Activated CD4-positive, alpha-beta T cell treated with anti-CD3 and anti-CD28 coated beads, Interleukin-2, amount 10 ng/mL, durations not matched to agents 24 days and 14 days (primary cell): ENCODE measurements at regions of chr2 and their contacts with region 1.

Region 1: GRCh38 chr2:213151437-213152064 is at the start of gene IKZF2:
- DNase-seq: peak; percentile 88
- H3K4me3 Mint-ChIP-seq: peak within 1 kb of the TSS; percentile 88
- H3K27ac Mint-ChIP-seq: peak within 1 kb of the TSS; percentile 73
- H3K4me1 Mint-ChIP-seq: peaks cover 28% of the 10 kb centered on the region
- H3K27me3 Mint-ChIP-seq: peaks cover 59% of the 10 kb centered on the region
- total RNA-seq, gene IKZF2: 1.7 and 1.9 TPM in 2 replicates

Region 2: DNA sequence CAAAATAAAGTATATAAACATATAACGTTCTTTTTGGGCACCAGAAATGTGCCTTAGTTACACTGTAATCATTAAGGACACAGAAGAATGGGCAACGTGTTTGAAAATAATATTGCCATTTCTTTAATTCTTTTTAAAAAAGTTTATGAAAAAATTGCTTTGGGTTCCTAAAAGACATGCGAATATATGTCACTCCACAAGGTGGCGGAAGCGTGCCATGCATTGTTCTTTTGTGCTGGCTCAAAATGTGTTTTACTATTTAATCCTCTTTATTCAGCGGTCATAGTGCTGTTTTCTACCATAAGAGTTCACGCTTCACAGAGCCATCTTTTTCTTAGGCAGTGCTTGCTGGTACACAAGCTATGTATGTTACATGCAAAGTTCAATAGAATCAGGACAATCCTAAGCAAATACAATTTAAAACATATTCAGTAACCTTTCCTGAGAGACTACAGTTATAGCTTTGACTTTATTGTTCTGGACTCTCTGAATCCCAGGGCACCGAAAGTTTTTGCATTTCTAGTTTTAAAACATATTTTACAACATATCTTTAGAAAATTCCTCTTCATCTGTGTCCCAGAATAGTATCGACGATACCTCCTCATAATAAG is 465.2 kb before region 1 on chr2:
- intact Hi-C with region 1: loop called (anchors 1 kb)
- DNase-seq: peak; percentile 80
- H3K4me3 Mint-ChIP-seq: no peak overlapping the region
- H3K27ac Mint-ChIP-seq: no peak overlapping the region
- H3K4me1 Mint-ChIP-seq: peaks cover 1% of the 10 kb centered on the region
- H3K27me3 Mint-ChIP-seq: no peaks in the 10 kb centered on the region

Region 3: GRCh38 chr2:212777020-212777491 is 374.5 kb before region 1 on chr2:
- intact Hi-C with region 1: loop called (anchors 1 kb)
- DNase-seq: peak; percentile 54
- H3K4me3 Mint-ChIP-seq: no peak overlapping the region
- H3K27ac Mint-ChIP-seq: no peak overlapping the region
- H3K4me1 Mint-ChIP-seq: peaks cover 2% of the 10 kb centered on the region
- H3K27me3 Mint-ChIP-seq: no peaks in the 10 kb centered on the region

Region 4: GRCh38 chr2:212882626-212883025 is 268.9 kb before region 1 on chr2:
- intact Hi-C with region 1: no loop called
- DNase-seq: no peak
- H3K4me3 Mint-ChIP-seq: no peak overlapping the region
- H3K27ac Mint-ChIP-seq: no peak overlapping the region
- H3K4me1 Mint-ChIP-seq: peaks cover 2% of the 10 kb centered on the region
- H3K27me3 Mint-ChIP-seq: no peaks in the 10 kb centered on the region

Region 5: GRCh38 chr2:213021971-213022899 is 129.3 kb before region 1 on chr2:
- intact Hi-C with region 1: loop called (anchors 2 kb)
- DNase-seq: no peak
- H3K4me3 Mint-ChIP-seq: no peak overlapping the region
- H3K27ac Mint-ChIP-seq: peak overlapping the region; percentile 22
- H3K4me1 Mint-ChIP-seq: peaks cover 5% of the 10 kb centered on the region
- H3K27me3 Mint-ChIP-seq: peaks cover 19% of the 10 kb centered on the region

Region 6: DNA sequence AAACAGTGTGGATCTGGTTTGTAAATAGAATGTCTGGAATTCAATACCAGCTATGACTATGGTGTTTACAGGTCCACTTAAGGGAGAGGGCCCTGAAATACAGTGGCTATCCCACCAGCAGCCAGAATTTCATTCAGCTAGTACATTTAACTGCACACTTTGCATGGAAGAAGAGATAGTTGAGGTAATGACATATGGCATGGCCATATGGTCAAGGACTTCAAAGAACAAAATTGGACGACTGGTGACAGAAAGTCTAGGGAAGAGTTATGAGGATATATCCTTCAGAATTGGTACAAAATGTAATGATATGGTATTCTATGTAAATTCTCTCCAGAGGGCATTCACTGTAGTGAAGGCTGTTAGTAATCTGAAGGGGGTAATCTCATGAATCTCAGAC is 105.1 kb before region 1 on chr2:
- intact Hi-C with region 1: no loop called
- DNase-seq: no peak
- H3K4me3 Mint-ChIP-seq: no peak overlapping the region
- H3K27ac Mint-ChIP-seq: no peak overlapping the region
- H3K4me1 Mint-ChIP-seq: no peaks in the 10 kb centered on the region
- H3K27me3 Mint-ChIP-seq: no peaks in the 10 kb centered on the region

Region 7: DNA sequence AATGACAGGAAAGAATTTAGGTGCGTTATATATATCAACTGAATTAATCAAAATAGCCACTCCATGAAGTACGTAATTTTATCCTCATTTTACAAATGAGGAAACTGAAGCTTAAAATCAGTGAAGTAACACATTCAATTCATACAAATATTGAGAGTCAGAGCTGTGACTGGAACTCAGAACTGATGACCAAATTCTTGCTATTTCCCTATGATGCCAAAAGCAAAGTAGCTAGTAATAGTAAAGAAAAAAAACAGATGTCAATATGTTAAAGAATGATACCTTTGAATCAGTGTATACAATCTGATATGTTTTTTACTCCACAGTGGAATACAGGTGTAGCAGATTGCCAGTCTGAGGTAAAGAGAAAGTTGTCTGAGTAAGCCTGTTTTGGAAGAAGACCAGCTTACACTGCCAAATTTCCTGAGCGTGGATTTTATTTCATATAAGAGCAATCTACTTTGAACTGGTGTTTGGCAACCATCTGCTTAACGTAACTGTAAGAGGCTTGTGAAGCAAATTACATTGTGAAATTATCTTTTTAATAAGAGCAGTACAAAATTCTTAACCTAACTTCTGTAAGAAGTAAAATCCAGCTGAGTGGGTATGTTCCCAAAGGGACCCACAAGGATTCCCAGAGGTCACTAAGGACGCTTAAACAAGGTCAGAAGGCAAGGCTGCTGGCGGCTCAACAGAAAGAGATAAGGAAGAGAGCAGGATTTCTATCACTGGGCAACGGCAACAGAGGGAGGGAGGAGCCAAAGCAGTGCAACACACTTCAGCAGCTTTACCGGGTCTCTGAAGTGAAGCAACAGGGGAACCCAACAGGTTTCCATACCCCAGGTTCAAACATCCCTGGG is 85.7 kb before region 1 on chr2:
- intact Hi-C with region 1: no loop called
- DNase-seq: no peak
- H3K4me3 Mint-ChIP-seq: no peak overlapping the region
- H3K27ac Mint-ChIP-seq: no peak overlapping the region
- H3K4me1 Mint-ChIP-seq: no peaks in the 10 kb centered on the region
- H3K27me3 Mint-ChIP-seq: peaks cover 4% of the 10 kb centered on the region

Region 8: DNA sequence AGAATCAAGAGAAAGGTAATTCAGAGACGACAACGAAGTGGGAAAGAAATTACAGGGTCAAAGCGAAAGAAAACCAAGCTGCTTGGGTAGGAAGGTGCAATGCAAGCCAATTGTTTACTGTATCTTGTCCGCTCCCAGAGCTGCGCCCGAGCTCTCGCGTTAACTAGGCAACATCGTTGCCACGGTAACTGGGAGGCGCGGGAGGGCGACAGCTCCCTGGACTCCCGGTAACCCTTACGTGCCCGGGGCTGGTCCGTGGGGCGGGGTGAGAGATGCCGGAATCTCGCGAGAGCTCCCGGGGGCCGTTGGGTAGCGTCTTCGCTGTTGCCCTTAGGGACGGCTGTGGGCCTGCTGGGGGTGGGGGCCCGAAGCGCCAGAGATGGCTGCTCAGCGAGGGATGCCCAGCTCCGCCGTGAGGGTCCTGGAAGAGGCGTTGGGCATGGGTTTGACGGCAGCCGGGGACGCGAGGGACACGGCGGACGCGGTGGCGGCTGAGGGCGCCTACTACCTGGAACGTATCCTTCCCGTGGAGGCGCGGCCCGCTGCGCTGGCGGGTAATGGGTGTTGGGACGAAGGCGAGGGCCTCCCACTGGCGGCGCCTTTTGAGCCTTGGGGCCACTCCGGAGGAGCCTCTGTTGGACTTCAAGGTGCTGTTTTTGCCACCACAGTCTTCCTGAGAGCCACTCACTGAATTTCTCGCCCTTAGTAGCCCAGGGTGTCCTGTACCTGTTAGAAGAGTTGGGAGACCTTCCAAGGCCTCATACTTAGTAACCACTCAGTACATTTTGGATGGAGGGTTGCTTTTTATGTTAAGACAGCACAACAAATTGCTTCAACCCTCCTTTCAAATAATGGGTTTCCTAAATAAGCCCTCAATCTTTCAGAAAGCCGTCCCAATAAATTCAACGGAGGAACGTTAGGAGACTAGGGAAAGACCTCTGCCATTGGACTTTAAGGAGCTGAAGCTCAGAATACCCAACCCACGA is 132.8 kb after region 1 on chr2 and contains the start of gene SPAG16:
- intact Hi-C with region 1: loop called (anchors 5 kb)
- DNase-seq: peak; percentile 99
- H3K4me3 Mint-ChIP-seq: peak within 1 kb of the TSS; percentile 96
- H3K27ac Mint-ChIP-seq: peak within 1 kb of the TSS; percentile 87
- H3K4me1 Mint-ChIP-seq: peaks cover 17% of the 10 kb centered on the region
- H3K27me3 Mint-ChIP-seq: peaks cover 5% of the 10 kb centered on the region
- total RNA-seq, gene SPAG16: 6.8 and 7.2 TPM in 2 replicates